Activated naive CD8-positive, alpha-beta T cell treated with anti-CD3 and anti-CD28 coated beads, Interleukin-2, amount 10 ng/mL, durations not matched to agents 7 days and 5 days (primary cell): ENCODE measurements at regions of chr1 and their contacts with region 1.

Region 1: GRCh38 chr1:110645821-110646735 is 28.7 kb downstream of the KCNA3 start:
- DNase-seq: no peak
- ATAC-seq: no peak
- H3K4me3 Mint-ChIP-seq: peak overlapping the region; percentile 6
- H3K27ac Mint-ChIP-seq: peak overlapping the region; percentile 43
- H3K4me1 Mint-ChIP-seq: peaks cover 38% of the 10 kb centered on the region
- H3K27me3 Mint-ChIP-seq: no peaks in the 10 kb centered on the region

Region 2: DNA sequence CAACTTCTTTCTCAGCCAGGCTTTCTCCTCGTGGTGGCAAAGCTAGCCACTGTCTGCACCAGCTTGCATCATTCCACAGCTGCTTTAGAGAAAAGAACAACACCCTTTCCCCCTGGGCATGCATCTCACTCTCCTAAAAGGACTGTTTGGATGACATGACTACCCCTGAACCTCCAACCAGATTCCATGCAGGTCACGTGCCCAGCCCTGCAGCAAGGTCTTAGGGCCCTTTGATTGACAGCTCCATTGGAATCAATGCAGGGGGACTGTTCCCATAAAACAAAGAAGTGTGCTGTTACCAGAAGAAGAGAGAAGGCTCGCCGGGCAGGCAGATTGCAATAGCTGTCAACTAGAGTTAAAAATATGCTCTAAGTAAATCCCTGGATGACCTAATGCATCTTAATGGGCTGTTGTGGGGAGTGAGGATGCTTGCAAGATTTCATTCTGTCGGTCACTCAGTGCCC is 64.4 kb before region 1 on chr1:
- POLR2A ChIA-PET with region 1: no interaction called
- DNase-seq: no peak
- ATAC-seq: no peak
- H3K4me3 Mint-ChIP-seq: no peak overlapping the region
- H3K27ac Mint-ChIP-seq: no peak overlapping the region
- H3K4me1 Mint-ChIP-seq: no peaks in the 10 kb centered on the region
- H3K27me3 Mint-ChIP-seq: peaks cover 23% of the 10 kb centered on the region

Region 3: GRCh38 chr1:110668549-110668948 is 22.5 kb after region 1 on chr1:
- POLR2A ChIA-PET with region 1: interaction called, 70 read pairs
- DNase-seq: no peak
- ATAC-seq: peak; percentile 25
- H3K4me3 Mint-ChIP-seq: peak overlapping the region; percentile 84
- H3K27ac Mint-ChIP-seq: peak overlapping the region; percentile 90
- H3K4me1 Mint-ChIP-seq: peaks cover 38% of the 10 kb centered on the region
- H3K27me3 Mint-ChIP-seq: no peaks in the 10 kb centered on the region

Region 4: DNA sequence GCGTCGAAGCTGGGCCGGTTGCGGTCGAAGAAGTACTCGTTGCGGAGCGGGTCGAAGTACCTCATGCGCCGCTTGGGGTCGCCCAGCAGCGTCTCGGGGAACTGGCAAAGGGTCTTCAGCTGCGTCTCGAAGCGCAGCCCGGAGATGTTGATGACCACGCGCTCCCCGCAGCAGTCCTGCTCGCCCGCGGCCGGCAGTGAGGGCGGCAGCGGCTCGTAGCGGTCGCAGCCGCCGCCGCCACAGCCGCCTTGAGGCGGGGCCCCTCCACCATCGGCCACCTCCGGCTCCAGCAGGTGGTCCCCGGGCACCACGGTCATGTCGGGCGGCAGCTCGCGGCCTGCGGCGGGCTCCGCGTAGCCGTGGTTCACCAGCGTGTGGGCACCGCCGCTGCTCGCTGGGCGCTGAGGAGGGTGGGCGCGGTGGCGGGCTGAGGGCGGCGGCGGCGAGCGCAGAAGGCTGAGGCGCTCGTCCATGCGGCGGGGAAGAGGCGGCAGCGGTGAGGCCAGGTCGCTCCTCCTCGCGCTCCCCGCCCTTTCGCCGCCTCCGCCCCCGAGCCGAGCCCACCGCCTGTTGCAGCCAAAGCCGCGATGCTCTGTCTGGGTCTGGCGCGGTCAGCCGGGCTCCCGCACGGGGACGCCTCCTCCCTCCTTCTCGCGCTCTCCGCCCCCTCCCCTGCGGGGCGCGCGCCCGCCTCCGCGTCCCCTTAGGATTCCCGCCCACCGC is 28.4 kb after region 1 on chr1 and contains the start of gene KCNA3:
- POLR2A ChIA-PET with region 1: interaction called, 70 read pairs
- DNase-seq: peak; percentile 82
- ATAC-seq: peak; percentile 35
- H3K4me3 Mint-ChIP-seq: peak within 1 kb of the TSS; percentile 100
- H3K27ac Mint-ChIP-seq: peak within 1 kb of the TSS; percentile 99
- H3K4me1 Mint-ChIP-seq: peaks cover 31% of the 10 kb centered on the region
- H3K27me3 Mint-ChIP-seq: no peaks in the 10 kb centered on the region
- total RNA-seq, gene KCNA3: 68.4 to 74.0 TPM